ENCODE measurements at regions of chr17 and their contacts with region 1.

Region 1: DNA sequence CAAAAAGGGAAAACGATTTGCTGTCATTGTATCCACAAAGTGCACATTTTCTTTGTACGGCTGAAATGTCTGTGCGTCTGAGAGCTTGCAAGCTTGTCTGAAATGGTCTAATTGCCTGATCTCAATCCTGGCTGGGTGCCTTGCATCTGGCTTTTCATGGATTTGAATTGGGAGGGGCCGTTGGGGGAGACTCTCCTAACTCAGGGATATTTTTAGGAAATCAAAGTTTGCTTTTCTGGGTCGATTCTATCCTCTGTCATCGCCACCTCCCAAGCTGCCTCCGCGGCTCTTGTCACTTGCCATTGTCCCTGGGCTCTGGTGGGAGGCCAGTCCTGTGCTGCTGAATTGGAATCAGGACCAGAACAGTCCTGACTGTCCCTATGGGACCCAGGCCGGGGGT is 33.3 kb upstream of the MGAT5B start:
- DNase-seq: no peak
- ATAC-seq: no peak
- H3K4me3 ChIP-seq: no peak overlapping the region
- H3K27ac ChIP-seq: no peak overlapping the region
- H3K4me1 ChIP-seq: peaks cover 8% of the 10 kb centered on the region
- H3K27me3 ChIP-seq: peaks cover 3 to 54% of the 10 kb centered on the region in 2 experiments; a peak in 4 of 5 replicates
- CTCF ChIP-seq: no peak
- EP300 ChIP-seq: no peak
- POLR2A ChIP-seq: no peak
- RAD21 ChIP-seq: no peak

Region 2: DNA sequence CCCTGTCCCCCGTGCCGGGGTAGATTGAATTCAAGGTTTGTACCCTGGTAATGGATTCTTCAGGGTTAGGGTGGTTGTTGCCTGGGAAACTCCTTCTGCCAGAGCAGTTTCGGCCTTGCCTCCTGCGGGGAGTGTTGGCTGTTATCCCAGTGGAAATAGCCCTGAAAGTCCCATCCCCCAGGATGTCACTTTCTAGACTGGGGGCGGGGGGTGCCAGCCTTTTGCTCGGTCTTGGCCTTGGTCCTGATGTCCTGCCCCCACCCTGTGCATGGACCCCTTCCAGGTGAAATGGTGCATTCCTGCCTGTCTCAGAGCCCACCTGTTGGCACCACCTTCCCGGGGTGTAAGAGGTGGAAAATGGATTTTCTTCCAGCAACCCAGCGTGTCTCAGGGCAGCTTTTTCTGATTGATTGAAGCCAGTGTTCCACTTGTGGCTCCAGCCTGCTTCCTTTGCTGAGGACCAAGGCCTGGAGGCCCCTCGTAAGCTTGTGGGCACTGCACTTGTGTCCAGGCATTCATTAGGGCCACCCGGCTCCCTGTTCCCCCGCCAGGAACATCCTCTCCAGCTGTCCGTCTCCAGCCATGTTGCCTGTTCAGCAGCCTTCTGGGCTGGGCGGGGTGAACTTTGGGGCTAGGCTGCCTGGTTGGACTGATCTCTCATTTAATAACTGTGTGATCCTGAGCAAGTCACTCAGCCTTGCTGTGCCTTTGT is 58.9 kb after region 1 on chr17:
- CTCF ChIA-PET with region 1: no interaction called
- POLR2A ChIA-PET with region 1: no interaction called
- in situ Hi-C with region 1: loop called (anchors 10 kb)
- intact Hi-C with region 1: no loop called
- DNase-seq: no peak
- ATAC-seq: no peak
- H3K4me3 ChIP-seq: no peak overlapping the region
- H3K27ac ChIP-seq: no peak overlapping the region
- H3K4me1 ChIP-seq: no peaks in the 10 kb centered on the region
- H3K27me3 ChIP-seq: peaks cover 3 to 56% of the 10 kb centered on the region in 2 experiments; a peak in 4 of 5 replicates
- CTCF ChIP-seq: no peak
- EP300 ChIP-seq: no peak
- POLR2A ChIP-seq: no peak
- RAD21 ChIP-seq: no peak